Activated CD4-positive, alpha-beta T cell treated with anti-CD3 and anti-CD28 coated beads, Interleukin-2, amount 10 ng/mL, durations not matched to agents 24 days and 14 days (primary cell): ENCODE measurements at regions of chr10 and their contacts with region 1.

Region 1: GRCh38 chr10:62244780-62245467 is 23.7 kb downstream of the RTKN2 start:
- DNase-seq: peak; percentile 90
- H3K4me3 Mint-ChIP-seq: peak overlapping the region; percentile 69
- H3K27ac Mint-ChIP-seq: peak overlapping the region; percentile 82
- H3K4me1 Mint-ChIP-seq: peaks cover 36% of the 10 kb centered on the region
- H3K27me3 Mint-ChIP-seq: no peaks in the 10 kb centered on the region

Region 2: GRCh38 chr10:61215246-61215645 is 1029.7 kb before region 1 on chr10:
- intact Hi-C with region 1: no loop called
- DNase-seq: no peak
- H3K4me3 Mint-ChIP-seq: no peak overlapping the region
- H3K27ac Mint-ChIP-seq: no peak overlapping the region
- H3K4me1 Mint-ChIP-seq: no peaks in the 10 kb centered on the region
- H3K27me3 Mint-ChIP-seq: no peaks in the 10 kb centered on the region

Region 3: DNA sequence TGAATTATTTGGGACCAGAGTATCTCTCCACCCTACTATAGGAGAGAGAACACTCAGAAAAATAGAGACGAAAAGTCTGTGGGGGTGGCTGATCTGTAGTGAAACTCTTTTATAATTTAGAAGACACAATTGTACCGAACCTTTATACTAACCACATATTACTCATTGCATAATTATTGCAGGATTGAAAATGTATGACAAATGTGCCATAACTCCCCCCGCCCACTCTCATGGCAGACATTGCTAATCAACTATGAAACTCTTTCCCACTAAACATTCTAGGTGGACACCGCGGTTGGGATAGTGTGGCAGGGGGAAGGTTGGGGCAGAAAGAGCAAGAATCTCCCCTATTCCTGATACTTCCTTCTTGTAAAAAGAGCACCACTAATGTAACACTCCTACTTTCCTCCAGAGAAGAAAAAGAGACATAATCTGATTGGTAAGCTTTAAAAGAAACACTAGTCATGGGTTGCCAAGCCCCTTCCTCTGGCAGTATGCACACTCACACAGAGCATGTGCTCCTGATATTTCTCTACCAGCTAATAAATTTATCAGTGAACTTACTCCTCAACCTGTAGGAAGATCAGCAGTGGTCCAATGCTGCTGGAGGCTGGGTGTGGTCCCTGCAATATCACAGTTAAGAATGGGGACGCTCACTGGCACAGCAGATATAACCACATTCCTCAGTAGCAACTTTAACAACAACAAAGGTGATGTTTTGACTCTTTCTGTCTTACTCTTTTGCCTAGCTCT is 362.1 kb before region 1 on chr10:
- intact Hi-C with region 1: loop called (anchors 5 kb)
- DNase-seq: no peak
- H3K4me3 Mint-ChIP-seq: peak overlapping the region; percentile 32
- H3K27ac Mint-ChIP-seq: peak overlapping the region; percentile 79
- H3K4me1 Mint-ChIP-seq: peaks cover 16% of the 10 kb centered on the region
- H3K27me3 Mint-ChIP-seq: peaks cover 2% of the 10 kb centered on the region

Region 4: GRCh38 chr10:61896854-61897661 is 347.9 kb before region 1 on chr10:
- intact Hi-C with region 1: loop called (anchors 1 kb)
- DNase-seq: peak; percentile 91
- H3K4me3 Mint-ChIP-seq: peak overlapping the region; percentile 92
- H3K27ac Mint-ChIP-seq: peak overlapping the region; percentile 93
- H3K4me1 Mint-ChIP-seq: peaks cover 36% of the 10 kb centered on the region
- H3K27me3 Mint-ChIP-seq: no peaks in the 10 kb centered on the region

Region 5: DNA sequence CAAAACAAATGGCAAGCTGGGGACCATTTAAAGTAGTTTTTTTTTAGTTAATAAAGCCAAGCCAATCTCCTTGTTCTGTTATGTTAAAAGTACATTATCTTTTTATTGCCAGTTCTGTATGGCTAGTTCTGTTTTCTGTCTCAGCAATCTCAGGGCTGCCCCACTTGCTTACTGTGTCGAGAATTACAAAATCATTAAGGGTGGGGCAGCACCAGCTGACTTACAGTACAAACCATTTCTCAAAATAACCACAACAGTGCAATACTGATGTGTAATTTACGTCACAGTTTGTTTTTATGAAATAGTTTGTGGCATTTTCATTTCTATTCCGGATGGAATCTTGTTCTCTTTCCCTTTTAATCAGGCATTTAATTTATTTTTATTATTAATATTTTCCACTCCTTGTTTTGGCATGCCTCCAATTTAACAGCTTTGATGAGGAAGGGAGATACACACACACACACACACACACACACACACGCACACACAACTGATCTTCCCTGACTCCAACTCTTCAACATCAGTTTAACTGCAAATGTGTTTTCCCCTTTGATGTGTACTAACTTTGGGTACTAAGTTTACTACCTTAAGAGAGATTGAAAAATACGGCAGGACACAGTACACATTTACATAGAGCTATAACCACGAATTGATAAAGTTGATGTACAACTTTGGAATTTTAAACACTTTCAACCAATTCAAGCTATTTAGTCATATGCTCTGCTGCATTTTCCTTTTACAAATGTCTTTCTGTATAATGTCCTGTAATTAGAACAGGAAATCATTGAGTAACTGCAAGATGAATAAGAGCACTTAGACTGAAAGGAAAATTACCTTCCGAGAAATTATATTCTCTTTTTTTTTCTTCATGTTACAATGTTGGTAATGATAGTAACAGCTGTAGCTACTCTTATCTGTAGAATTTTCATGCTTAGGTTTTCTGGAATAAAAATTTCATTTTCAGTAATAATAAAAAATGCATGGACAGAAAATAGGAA is 252.0 kb before region 1 on chr10:
- intact Hi-C with region 1: loop called (anchors 2 kb)
- DNase-seq: peak; percentile 91
- H3K4me3 Mint-ChIP-seq: peak overlapping the region; percentile 77
- H3K27ac Mint-ChIP-seq: peak overlapping the region; percentile 93
- H3K4me1 Mint-ChIP-seq: peaks cover 65% of the 10 kb centered on the region
- H3K27me3 Mint-ChIP-seq: no peaks in the 10 kb centered on the region

Region 6: DNA sequence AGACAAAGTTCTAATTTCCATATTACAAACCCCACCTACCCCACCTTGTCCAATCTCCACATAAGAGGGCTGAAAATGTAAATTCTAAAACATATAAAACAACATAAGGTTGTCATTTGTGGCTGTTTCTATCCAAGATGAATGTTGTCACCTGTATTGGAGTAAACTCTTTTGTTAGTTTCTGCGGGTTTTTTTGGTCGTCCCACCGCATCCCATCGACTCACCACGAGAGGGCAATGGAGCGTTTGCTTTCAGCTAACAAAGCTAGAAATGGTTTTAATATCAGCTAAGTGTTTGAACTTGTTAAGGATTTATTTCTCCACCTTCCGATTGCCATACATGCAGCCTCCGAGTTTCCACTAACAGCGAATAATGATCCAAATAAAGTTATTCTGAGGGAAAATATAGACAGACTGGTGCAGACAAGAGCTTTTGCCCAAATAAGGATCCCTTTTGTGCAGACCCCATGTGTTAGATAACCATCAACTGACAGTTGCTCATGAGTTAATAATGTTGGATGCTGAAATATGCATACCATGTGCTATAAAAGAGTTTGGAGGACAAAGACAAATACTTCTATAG is 206.2 kb before region 1 on chr10:
- intact Hi-C with region 1: loop called (anchors 1 kb)
- DNase-seq: peak; percentile 94
- H3K4me3 Mint-ChIP-seq: peak overlapping the region; percentile 67
- H3K27ac Mint-ChIP-seq: peak overlapping the region; percentile 76
- H3K4me1 Mint-ChIP-seq: peaks cover 73% of the 10 kb centered on the region
- H3K27me3 Mint-ChIP-seq: no peaks in the 10 kb centered on the region

Region 7: GRCh38 chr10:62109587-62110293 is 135.2 kb before region 1 on chr10:
- intact Hi-C with region 1: loop called (anchors 5 kb)
- DNase-seq: no peak
- H3K4me3 Mint-ChIP-seq: peak overlapping the region; percentile 6
- H3K27ac Mint-ChIP-seq: peak overlapping the region; percentile 3
- H3K4me1 Mint-ChIP-seq: peaks cover 35% of the 10 kb centered on the region
- H3K27me3 Mint-ChIP-seq: no peaks in the 10 kb centered on the region

Region 8: GRCh38 chr10:62231371-62231770 is 13.6 kb before region 1 on chr10:
- intact Hi-C with region 1: no loop called
- DNase-seq: no peak
- H3K4me3 Mint-ChIP-seq: no peak overlapping the region
- H3K27ac Mint-ChIP-seq: no peak overlapping the region
- H3K4me1 Mint-ChIP-seq: peaks cover 13% of the 10 kb centered on the region
- H3K27me3 Mint-ChIP-seq: no peaks in the 10 kb centered on the region

Region 9: DNA sequence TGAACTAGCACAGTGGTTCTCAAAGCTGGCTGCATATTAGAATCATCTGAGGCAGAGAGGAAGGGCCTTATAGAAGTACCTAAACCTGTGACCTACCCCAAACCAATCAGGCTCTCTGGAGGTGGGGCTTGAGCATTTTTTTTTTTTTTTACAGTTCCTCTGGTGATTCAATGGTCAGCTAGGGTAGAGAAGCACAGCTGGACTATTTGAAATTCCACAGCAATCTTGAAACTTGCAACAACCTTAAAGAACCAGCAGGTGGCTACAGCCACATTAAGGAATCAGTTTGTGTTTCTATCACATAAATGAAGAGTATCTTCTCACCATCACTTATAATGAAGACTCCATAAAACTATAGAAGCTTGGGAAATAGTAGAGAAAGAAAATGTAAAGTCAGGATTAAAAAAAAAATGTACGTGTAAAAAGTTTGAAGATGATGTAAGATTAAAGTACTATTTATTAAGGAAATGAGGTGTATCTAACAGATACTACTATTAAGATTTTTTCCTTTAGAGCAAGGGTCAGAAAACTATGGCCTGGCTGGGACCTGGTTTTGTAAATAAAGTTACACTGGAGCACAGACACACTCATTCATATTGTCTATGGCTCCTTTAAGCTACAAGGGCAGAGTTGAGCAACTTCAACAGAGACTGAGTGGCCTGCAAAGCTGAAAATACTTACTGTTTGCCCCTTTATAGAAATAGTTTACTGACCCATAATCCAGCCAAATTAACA is 19.9 kb after region 1 on chr10:
- intact Hi-C with region 1: no loop called
- DNase-seq: no peak
- H3K4me3 Mint-ChIP-seq: no peak overlapping the region
- H3K27ac Mint-ChIP-seq: no peak overlapping the region
- H3K4me1 Mint-ChIP-seq: peaks cover 20% of the 10 kb centered on the region
- H3K27me3 Mint-ChIP-seq: peaks cover 15% of the 10 kb centered on the region